ENCODE measurements at regions of chr12 and their contacts with region 1.

Region 1: GRCh38 chr12:64801381-64801780 is 23.1 kb upstream of the TBC1D30 start:
- DNase-seq: no peak
- H3K4me3 ChIP-seq: no peak overlapping the region
- H3K27ac ChIP-seq: no peak overlapping the region
- H3K4me1 ChIP-seq: no peaks in the 10 kb centered on the region
- H3K27me3 ChIP-seq: no peaks in the 10 kb centered on the region
- CTCF ChIP-seq: peak in 2 of 3 experiments; percentile 44 to 89; a peak in 3 of 4 replicates
- EP300 ChIP-seq: no peak
- POLR2A ChIP-seq: no peak
- RAD21 ChIP-seq: peak; percentile 18 to 40; a peak in 3 of 4 replicates

Region 2: DNA sequence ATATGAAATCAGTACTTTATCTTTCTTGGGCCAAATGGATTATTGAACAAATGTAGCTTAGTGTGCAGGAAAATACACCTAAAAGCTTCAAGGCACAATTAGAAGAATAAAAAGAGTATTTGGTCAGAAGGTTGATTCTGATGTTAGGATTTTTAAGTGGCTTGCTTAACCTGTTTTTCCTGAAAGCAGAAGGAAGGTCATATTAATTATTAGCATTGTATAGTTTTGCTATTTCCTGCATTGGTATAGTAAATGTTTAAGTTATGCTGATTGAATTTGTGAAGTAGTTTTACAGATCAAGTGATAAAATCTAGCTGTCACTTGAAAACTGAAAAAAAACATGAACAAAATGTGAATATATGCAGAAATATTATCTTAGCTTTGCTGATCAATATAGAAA is 11.2 kb before region 1 on chr12:
- CTCF ChIA-PET with region 1: interaction called, 25 read pairs
- POLR2A ChIA-PET with region 1: no interaction called
- DNase-seq: no peak
- H3K4me3 ChIP-seq: no peak overlapping the region
- H3K27ac ChIP-seq: no peak overlapping the region
- H3K4me1 ChIP-seq: peaks cover 0 to 6% (median 4%) of the 10 kb centered on the region in 4 experiments; a peak in 4 of 7 replicates
- H3K27me3 ChIP-seq: no peaks in the 10 kb centered on the region
- CTCF ChIP-seq: no peak
- EP300 ChIP-seq: no peak
- POLR2A ChIP-seq: no peak
- RAD21 ChIP-seq: no peak

Region 3: DNA sequence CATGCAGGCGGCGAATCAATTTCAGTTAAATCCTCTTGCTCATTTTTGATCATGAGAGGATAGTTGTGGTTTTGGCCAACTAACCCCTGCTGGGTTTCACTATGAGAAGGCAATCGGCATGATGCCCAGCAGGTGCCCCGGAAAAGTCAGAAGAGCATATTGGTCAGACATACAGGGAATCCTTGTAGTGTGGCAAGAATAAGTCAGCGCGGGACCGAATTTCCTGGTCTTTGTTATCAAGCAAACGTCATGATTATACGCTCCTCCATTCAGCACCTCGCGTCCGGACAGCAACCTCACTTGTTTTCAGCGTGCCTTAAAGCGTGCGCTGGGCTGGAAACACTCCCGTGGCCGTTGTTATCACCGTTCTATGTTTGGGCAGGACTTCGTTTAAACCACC is 24.9 kb after region 1 on chr12:
- CTCF ChIA-PET with region 1: interaction called, 13 read pairs
- POLR2A ChIA-PET with region 1: interaction called, 3 read pairs
- DNase-seq: peak in 1 of 2 experiments; percentile 86
- H3K4me3 ChIP-seq: peak overlapping the region; percentile 19 to 67 (median 52); a peak in 6 of 8 replicates
- H3K27ac ChIP-seq: no peak overlapping the region
- H3K4me1 ChIP-seq: peaks cover 0 to 17% (median 7%) of the 10 kb centered on the region in 4 experiments; a peak in 4 of 7 replicates
- H3K27me3 ChIP-seq: peaks cover 23 to 44% (median 37%) of the 10 kb centered on the region in 4 experiments
- CTCF ChIP-seq: no peak
- EP300 ChIP-seq: no peak
- POLR2A ChIP-seq: no peak
- RAD21 ChIP-seq: no peak

Region 4: GRCh38 chr12:64877363-64878004 is 76.1 kb after region 1 on chr12:
- CTCF ChIA-PET with region 1: interaction called, 22 read pairs
- POLR2A ChIA-PET with region 1: no interaction called
- DNase-seq: no peak
- H3K4me3 ChIP-seq: no peak overlapping the region
- H3K27ac ChIP-seq: no peak overlapping the region
- H3K4me1 ChIP-seq: no peaks in the 10 kb centered on the region
- H3K27me3 ChIP-seq: no peaks in the 10 kb centered on the region
- CTCF ChIP-seq: no peak
- EP300 ChIP-seq: no peak
- POLR2A ChIP-seq: no peak
- RAD21 ChIP-seq: no peak

Region 5: DNA sequence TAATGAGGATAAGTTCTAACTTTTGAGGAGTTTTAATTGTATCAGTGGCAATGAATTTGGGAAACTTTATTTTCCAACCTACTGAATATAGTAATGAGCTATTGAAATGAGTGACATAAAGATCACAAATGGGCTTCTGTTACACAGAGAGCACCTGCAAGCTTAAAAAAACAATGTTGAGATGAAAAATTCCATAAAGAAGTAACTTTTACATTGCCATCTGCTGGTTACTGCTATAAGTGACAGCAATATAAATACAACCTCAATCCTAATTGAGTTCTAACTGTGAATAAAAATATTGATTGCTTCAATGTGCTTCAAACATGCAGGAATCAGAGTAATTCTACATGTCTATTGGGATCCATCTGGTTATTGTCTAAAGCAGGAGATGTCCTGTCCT is 305.6 kb after region 1 on chr12:
- CTCF ChIA-PET with region 1: interaction called, 15 read pairs
- POLR2A ChIA-PET with region 1: no interaction called
- DNase-seq: no peak
- H3K4me3 ChIP-seq: no peak overlapping the region
- H3K27ac ChIP-seq: no peak overlapping the region
- H3K4me1 ChIP-seq: no peaks in the 10 kb centered on the region
- H3K27me3 ChIP-seq: no peaks in the 10 kb centered on the region
- CTCF ChIP-seq: peak in 1 of 3 experiments; percentile 38; a peak in 2 of 4 replicates
- EP300 ChIP-seq: no peak
- POLR2A ChIP-seq: no peak
- RAD21 ChIP-seq: no peak

Measured in H1 (cell line).